Sigmoid colon (tissue), 7 donors: ENCODE measurements at regions of chr9 and their contacts with region 1.

Region 1: DNA sequence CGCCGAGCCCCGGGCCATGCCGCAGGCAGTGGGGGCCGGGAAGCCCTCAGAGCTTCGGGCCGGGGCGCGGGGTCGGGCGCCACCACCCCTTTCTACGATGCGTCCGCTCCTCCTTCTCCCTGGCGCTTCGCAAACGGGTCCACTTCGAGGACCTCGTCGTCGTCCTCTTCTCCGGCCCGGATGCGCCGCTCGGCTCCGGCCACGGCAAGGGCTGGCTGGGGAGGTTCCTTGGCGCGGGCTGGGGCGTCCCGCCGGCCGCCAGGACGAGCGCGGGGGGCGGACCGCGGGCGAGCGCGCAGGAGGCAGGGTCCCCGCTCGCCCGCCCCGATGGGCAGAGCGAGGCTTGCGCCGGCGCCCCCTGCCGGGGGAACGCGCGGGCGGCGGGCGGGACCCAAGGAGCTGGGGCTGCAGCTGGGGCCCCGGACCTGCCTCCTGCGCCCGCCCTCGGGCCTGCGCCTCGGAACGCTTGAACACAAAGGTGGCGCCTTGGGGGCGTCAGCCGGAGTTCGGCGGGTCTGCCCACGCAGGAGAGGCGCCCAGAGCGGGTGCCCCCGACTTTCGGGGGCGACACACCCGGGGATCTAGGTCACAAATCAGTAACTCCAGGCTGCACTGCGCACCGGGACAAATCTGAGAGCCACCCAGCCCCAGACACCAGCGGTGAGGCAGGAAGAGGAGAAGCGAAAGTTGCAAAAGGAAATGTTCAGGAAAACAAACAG is at the start of gene ROR2:
- DNase-seq: peak; percentile 89
- H3K4me3 ChIP-seq: peak within 1 kb of the TSS; percentile 66 to 88 (median 76)
- H3K27ac ChIP-seq: peak within 1 kb of the TSS; percentile 88 to 95 (median 92)
- H3K4me1 ChIP-seq: peaks cover 0 to 44% (median 41%) of the 10 kb centered on the region in 4 donors
- H3K27me3 ChIP-seq: peaks cover 0 to 15% (median 0%) of the 10 kb centered on the region in 3 donors
- CTCF ChIP-seq: peak in 3 of 4 experiments; percentile 15 to 70 (median 36)
- EP300 ChIP-seq: no peak
- POLR2A ChIP-seq: peak; percentile 24 to 31
- total RNA-seq, gene ROR2: 51.4 to 81.7 (median 59.8) TPM

Region 2: DNA sequence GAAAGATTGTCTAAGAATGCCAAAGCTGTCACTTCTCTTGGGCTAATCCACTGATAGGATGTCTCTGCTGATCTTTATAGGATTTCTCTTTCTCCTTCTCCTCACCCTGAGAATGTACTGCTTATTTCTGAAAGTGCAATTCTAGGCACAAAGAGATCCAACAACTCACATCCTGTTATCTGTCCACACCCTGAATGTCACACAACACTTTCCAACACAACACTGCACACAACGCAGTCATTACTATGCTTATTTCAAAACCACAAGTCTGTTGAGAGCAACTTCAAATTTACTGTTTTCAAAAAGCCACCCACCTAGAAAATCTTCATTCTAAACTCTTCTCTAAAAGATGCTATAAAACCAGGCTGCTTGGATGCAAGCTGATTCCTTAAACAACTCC is 215.1 kb before region 1 on chr9:
- intact Hi-C with region 1: loop called (anchors 1 kb)
- DNase-seq: no peak
- H3K4me3 ChIP-seq: no peak overlapping the region
- H3K27ac ChIP-seq: peak overlapping the region in 2 of 4 donors; percentile 48 to 51
- H3K4me1 ChIP-seq: peaks cover 0 to 25% (median 7%) of the 10 kb centered on the region in 4 donors
- H3K27me3 ChIP-seq: no peaks in the 10 kb centered on the region
- CTCF ChIP-seq: no peak
- EP300 ChIP-seq: no peak
- POLR2A ChIP-seq: no peak

Region 3: GRCh38 chr9:91775011-91775707 is 174.9 kb before region 1 on chr9:
- intact Hi-C with region 1: loop called (anchors 2 kb)
- DNase-seq: peak; percentile 87
- H3K4me3 ChIP-seq: no peak overlapping the region
- H3K27ac ChIP-seq: peak overlapping the region in 3 of 4 donors; percentile 74 to 80 (median 79)
- H3K4me1 ChIP-seq: peaks cover 0 to 77% (median 70%) of the 10 kb centered on the region in 4 donors
- H3K27me3 ChIP-seq: no peaks in the 10 kb centered on the region
- CTCF ChIP-seq: peak; percentile 70 to 83 (median 76)
- EP300 ChIP-seq: no peak
- POLR2A ChIP-seq: no peak

Region 4: GRCh38 chr9:91898451-91899218 is 51.5 kb before region 1 on chr9:
- intact Hi-C with region 1: loop called (anchors 2 kb)
- DNase-seq: peak; percentile 92
- H3K4me3 ChIP-seq: no peak overlapping the region
- H3K27ac ChIP-seq: peak overlapping the region; percentile 82 to 94 (median 86)
- H3K4me1 ChIP-seq: peaks cover 0 to 99% (median 95%) of the 10 kb centered on the region in 4 donors
- H3K27me3 ChIP-seq: no peaks in the 10 kb centered on the region
- CTCF ChIP-seq: no peak
- EP300 ChIP-seq: peak; percentile 73 to 92 (median 74)
- POLR2A ChIP-seq: no peak

Region 5: GRCh38 chr9:92029553-92029952 is 79.4 kb after region 1 on chr9:
- intact Hi-C with region 1: no loop called
- DNase-seq: no peak
- H3K4me3 ChIP-seq: no peak overlapping the region
- H3K27ac ChIP-seq: no peak overlapping the region
- H3K4me1 ChIP-seq: peaks cover 0 to 8% (median 2%) of the 10 kb centered on the region in 4 donors
- H3K27me3 ChIP-seq: no peaks in the 10 kb centered on the region
- CTCF ChIP-seq: no peak
- EP300 ChIP-seq: no peak
- POLR2A ChIP-seq: no peak

Region 6: GRCh38 chr9:92097997-92098482 is 147.9 kb after region 1 on chr9:
- intact Hi-C with region 1: loop called (anchors 5 kb)
- DNase-seq: peak; percentile 94
- H3K4me3 ChIP-seq: peak overlapping the region; percentile 11 to 46 (median 30)
- H3K27ac ChIP-seq: peak overlapping the region; percentile 8 to 66 (median 54)
- H3K4me1 ChIP-seq: peaks cover 0 to 5% (median 0%) of the 10 kb centered on the region in 4 donors
- H3K27me3 ChIP-seq: no peaks in the 10 kb centered on the region
- CTCF ChIP-seq: no peak
- EP300 ChIP-seq: no peak
- POLR2A ChIP-seq: no peak

Region 7: GRCh38 chr9:92147030-92147851 is 197.1 kb after region 1 on chr9:
- intact Hi-C with region 1: no loop called
- DNase-seq: peak; percentile 82
- H3K4me3 ChIP-seq: peak overlapping the region in 1 of 4 donors; percentile 5
- H3K27ac ChIP-seq: peak overlapping the region; percentile 52 to 70 (median 64)
- H3K4me1 ChIP-seq: peaks cover 0 to 29% (median 19%) of the 10 kb centered on the region in 4 donors
- H3K27me3 ChIP-seq: peaks cover 0 to 2% (median 0%) of the 10 kb centered on the region in 3 donors
- CTCF ChIP-seq: no peak
- EP300 ChIP-seq: no peak
- POLR2A ChIP-seq: no peak